CD4-positive, alpha-beta T cell (primary cell): ENCODE measurements at regions of chr6 and their contacts with region 1.

Region 1: GRCh38 chr6:144215932-144216667 is 65.8 kb downstream of the STX11 start:
- DNase-seq: peak; percentile 84 to 96 (median 90)
- ATAC-seq: peak; percentile 84
- H3K4me3 ChIP-seq: peak overlapping the region; percentile 84
- H3K4me3 Mint-ChIP-seq: peak overlapping the region; percentile 98
- H3K27ac ChIP-seq: peak overlapping the region; percentile 73 to 82
- H3K27ac Mint-ChIP-seq: peak overlapping the region; percentile 100
- H3K4me1 ChIP-seq: peaks cover 26% of the 10 kb centered on the region
- H3K4me1 Mint-ChIP-seq: peaks cover 45% of the 10 kb centered on the region
- H3K27me3 ChIP-seq: no peaks in the 10 kb centered on the region
- H3K27me3 Mint-ChIP-seq: peaks cover 18% of the 10 kb centered on the region
- CTCF ChIP-seq: peak; percentile 78

Region 2: DNA sequence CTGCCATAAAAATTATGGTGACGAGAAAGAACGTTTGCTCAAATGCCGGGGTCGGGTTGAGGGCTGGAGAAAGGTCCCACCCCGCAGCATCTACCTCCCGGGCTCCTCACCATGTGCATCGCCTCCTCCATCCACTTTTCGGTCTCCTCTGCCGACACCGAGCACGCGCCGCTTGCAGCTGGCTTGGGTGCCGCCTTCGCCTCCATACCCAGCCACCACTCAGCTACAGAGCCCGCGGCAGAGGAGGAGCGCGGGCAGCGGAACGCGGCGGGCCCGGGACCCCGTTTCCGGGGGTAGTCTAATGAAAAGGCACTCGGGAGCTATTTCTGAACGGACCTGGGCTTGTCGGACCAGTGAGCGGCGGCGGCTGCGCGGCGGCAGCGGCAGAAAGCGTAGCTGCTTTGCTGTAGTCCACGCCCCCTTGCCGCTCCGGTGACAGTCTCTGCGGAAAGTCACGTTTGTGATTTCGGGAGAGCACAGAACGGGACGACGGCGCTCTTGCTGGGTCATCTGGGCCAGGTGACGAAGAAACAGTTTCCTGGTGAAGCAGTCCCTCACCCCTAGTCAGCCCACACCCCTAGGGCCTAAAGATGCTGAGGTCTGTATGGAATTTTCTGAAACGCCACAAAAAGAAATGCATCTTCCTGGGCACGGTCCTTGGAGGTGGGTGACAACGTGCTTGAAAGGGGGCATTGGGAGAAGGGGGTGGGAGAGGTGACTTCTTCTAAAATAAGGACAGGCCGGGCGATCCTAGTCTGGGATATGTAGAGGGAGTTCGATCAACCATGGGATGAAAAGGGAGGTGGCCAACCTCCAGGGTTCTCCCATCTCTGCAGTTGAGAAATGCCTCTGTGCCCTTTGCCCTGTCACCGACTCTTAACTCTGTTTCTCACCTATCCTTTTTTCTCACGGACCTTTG is 765.4 kb before region 1 on chr6 and contains the starts of genes ADAT2 and PEX3:
- CTCF ChIA-PET with region 1: no interaction called
- POLR2A ChIA-PET with region 1: no interaction called
- intact Hi-C with region 1: loop called in 1 of 2 experiments (anchors 10 kb)
- DNase-seq: peak; percentile 85 to 97 (median 90)
- ATAC-seq: peak; percentile 90
- H3K4me3 ChIP-seq: peak within 1 kb of the TSS; percentile 72
- H3K4me3 Mint-ChIP-seq: peak within 1 kb of the TSS; percentile 99
- H3K27ac ChIP-seq: peak within 1 kb of the TSS; percentile 72 to 78
- H3K27ac Mint-ChIP-seq: peak within 1 kb of the TSS; percentile 94
- H3K4me1 ChIP-seq: peaks cover 15% of the 10 kb centered on the region
- H3K4me1 Mint-ChIP-seq: peaks cover 60% of the 10 kb centered on the region
- H3K27me3 ChIP-seq: no peaks in the 10 kb centered on the region
- H3K27me3 Mint-ChIP-seq: no peaks in the 10 kb centered on the region
- CTCF ChIP-seq: no peak
- total RNA-seq, gene ADAT2: 14.6 to 17.4 TPM
- total RNA-seq, gene PEX3: 7.3 to 9.7 TPM

Region 3: DNA sequence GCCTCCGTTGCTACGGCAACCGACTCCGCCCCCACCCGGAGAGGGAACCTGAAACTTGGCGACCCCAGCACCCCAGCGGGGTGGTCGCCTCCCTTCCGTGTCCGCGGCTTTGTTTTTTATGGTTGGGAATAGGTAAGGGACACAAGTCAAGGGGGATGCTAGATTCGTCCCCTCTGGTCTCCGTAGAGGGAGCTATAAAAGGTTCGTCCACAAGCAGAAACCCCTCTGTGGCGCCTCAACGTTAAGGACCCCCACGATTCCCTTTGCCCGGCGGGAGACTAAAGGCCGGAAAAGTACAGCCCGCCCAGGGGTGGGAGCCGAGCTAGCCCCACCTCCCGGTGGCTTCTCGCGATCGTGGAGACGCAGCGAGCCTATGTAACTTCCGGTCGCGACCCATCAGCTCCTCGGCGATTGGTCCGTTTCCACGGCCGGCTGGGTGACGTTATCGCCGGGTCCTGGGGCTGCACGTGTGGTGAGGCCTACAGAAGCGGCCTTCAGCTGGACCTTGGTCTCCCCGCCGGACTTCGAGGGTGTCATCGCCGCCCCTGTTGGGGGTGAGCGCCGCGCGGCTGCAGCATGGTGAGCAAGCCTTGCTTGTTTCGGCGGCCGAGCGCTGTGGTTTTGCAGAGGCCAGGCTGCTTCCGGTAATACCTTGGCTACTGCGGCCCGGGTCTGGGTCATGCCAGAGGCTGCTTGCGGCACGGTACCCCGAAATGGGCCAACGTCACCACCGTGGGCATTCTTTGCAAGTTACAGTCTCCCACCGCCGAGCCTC is 373.0 kb before region 1 on chr6 and contains the start of gene LTV1:
- CTCF ChIA-PET with region 1: no interaction called
- POLR2A ChIA-PET with region 1: no interaction called
- intact Hi-C with region 1: loop called (anchors 5 to 10 kb)
- DNase-seq: peak; percentile 82 to 96 (median 88)
- ATAC-seq: peak; percentile 95
- H3K4me3 ChIP-seq: peak within 1 kb of the TSS; percentile 90
- H3K4me3 Mint-ChIP-seq: peak within 1 kb of the TSS; percentile 98
- H3K27ac ChIP-seq: peak within 1 kb of the TSS; percentile 88 to 95
- H3K27ac Mint-ChIP-seq: peak within 1 kb of the TSS; percentile 98
- H3K4me1 ChIP-seq: peaks cover 23% of the 10 kb centered on the region
- H3K4me1 Mint-ChIP-seq: peaks cover 36% of the 10 kb centered on the region
- H3K27me3 ChIP-seq: no peaks in the 10 kb centered on the region
- H3K27me3 Mint-ChIP-seq: no peaks in the 10 kb centered on the region
- CTCF ChIP-seq: no peak
- total RNA-seq, gene LTV1: 27.0 to 28.5 TPM

Region 4: DNA sequence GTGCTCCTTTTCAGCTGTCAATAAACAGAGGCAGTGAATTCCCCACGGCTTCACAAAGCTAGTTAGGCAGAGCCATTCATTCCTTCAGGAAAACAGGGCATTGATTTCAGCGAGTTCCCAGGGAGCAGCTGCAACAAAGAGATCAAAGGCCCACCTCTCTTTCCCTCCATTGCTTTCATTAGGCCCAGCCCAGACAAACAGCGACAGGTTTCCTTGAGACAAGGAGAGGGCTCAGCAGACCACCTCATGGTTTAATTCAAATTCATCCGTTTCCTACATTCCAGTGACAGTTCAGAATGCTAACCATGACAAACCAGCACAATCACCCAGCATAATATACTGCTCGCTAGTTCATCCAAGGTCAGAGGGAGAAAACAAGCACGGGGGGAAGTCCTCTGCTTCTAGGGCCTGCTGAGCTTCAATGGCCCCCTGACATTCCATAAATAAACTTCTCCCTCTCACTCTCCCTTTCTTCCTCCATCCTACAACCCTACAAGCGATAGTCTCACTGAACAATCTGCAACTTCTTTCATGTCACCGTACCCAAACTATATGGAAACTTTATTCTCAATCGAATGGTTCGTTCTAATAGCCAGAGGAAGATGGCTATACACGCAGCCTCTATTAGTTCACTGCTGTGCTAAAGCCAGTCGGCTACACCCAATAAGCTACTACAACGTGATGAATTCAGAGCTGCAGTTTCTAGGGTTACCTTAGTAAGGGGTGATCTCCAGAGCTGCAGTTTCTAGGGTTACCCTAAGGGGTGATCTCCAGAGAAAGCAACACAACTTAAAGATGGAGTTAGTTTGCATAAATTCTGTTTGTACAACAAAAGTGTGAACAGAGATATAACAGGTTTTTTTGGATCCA is 242.8 kb before region 1 on chr6:
- CTCF ChIA-PET with region 1: no interaction called
- POLR2A ChIA-PET with region 1: no interaction called
- intact Hi-C with region 1: no loop called
- DNase-seq: no peak
- ATAC-seq: no peak
- H3K4me3 ChIP-seq: no peak overlapping the region
- H3K4me3 Mint-ChIP-seq: no peak overlapping the region
- H3K27ac ChIP-seq: no peak overlapping the region
- H3K27ac Mint-ChIP-seq: no peak overlapping the region
- H3K4me1 ChIP-seq: no peaks in the 10 kb centered on the region
- H3K4me1 Mint-ChIP-seq: no peaks in the 10 kb centered on the region
- H3K27me3 ChIP-seq: no peaks in the 10 kb centered on the region
- H3K27me3 Mint-ChIP-seq: no peaks in the 10 kb centered on the region
- CTCF ChIP-seq: no peak

Region 5: GRCh38 chr6:144063744-144064401 is 152.2 kb before region 1 on chr6:
- CTCF ChIA-PET with region 1: interaction called, 7 read pairs
- POLR2A ChIA-PET with region 1: interaction called, 4 read pairs
- intact Hi-C with region 1: loop called in 1 of 2 experiments (anchors 1 kb)
- DNase-seq: peak; percentile 84 to 96 (median 91)
- ATAC-seq: peak; percentile 90
- H3K4me3 ChIP-seq: peak overlapping the region; percentile 73
- H3K4me3 Mint-ChIP-seq: peak overlapping the region; percentile 95
- H3K27ac ChIP-seq: peak overlapping the region; percentile 75 to 90
- H3K27ac Mint-ChIP-seq: peak overlapping the region; percentile 95
- H3K4me1 ChIP-seq: peaks cover 20% of the 10 kb centered on the region
- H3K4me1 Mint-ChIP-seq: peaks cover 31% of the 10 kb centered on the region
- H3K27me3 ChIP-seq: no peaks in the 10 kb centered on the region
- H3K27me3 Mint-ChIP-seq: no peaks in the 10 kb centered on the region
- CTCF ChIP-seq: peak; percentile 41

Region 6: GRCh38 chr6:144104898-144105487 is 111.1 kb before region 1 on chr6:
- CTCF ChIA-PET with region 1: interaction called, 7 read pairs
- POLR2A ChIA-PET with region 1: interaction called, 5 read pairs
- intact Hi-C with region 1: loop called (anchors 1 kb)
- DNase-seq: peak in 5 of 14 experiments; percentile 20 to 83 (median 82)
- ATAC-seq: peak; percentile 82
- H3K4me3 ChIP-seq: no peak overlapping the region
- H3K4me3 Mint-ChIP-seq: no peak overlapping the region
- H3K27ac ChIP-seq: no peak overlapping the region
- H3K27ac Mint-ChIP-seq: no peak overlapping the region
- H3K4me1 ChIP-seq: no peaks in the 10 kb centered on the region
- H3K4me1 Mint-ChIP-seq: peaks cover 4% of the 10 kb centered on the region
- H3K27me3 ChIP-seq: no peaks in the 10 kb centered on the region
- H3K27me3 Mint-ChIP-seq: no peaks in the 10 kb centered on the region
- CTCF ChIP-seq: peak; percentile 79

Region 7: DNA sequence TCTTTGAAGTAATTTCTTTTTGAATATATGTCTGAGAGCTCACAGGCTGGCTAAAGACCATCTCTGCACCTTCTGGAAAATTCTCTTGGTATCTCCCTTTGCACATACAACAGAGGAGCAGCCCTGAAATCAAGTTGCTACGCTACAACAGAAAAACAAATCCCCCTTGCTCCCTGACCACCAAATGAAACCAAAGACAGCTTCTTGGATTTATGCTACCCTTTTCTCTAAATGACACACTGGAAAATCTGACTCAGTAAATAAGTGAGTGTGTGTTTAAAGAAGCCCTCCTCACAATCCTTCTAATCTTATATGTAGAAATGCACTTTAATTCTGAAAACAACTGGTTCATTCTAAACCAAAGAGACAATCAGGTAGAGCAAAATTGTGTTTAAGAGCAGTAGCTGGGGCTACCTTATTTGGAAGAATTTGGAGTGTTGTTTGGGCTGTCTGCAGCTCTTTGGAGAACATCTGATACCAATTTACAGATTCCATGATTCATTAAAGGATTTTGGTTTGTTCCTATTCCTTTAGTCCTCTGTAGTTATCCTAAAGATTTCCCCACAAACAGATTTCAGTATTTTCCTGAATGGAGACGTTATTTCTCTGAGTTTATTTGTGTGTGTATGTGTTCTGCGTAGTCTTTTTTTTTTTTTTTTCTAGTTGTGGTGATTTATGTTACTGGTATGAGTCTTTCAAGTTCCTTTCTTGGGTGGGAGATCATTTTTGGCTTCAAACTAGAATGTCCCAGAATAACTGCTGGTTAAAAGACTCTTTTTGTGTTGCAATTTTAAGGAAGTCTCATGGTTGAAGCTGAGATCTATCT is 32.6 kb after region 1 on chr6:
- CTCF ChIA-PET with region 1: no interaction called
- POLR2A ChIA-PET with region 1: no interaction called
- intact Hi-C with region 1: no loop called
- DNase-seq: no peak
- ATAC-seq: no peak
- H3K4me3 ChIP-seq: no peak overlapping the region
- H3K4me3 Mint-ChIP-seq: no peak overlapping the region
- H3K27ac ChIP-seq: no peak overlapping the region
- H3K27ac Mint-ChIP-seq: no peak overlapping the region
- H3K4me1 ChIP-seq: no peaks in the 10 kb centered on the region
- H3K4me1 Mint-ChIP-seq: no peaks in the 10 kb centered on the region
- H3K27me3 ChIP-seq: no peaks in the 10 kb centered on the region
- H3K27me3 Mint-ChIP-seq: peaks cover 8% of the 10 kb centered on the region
- CTCF ChIP-seq: no peak

Region 8: GRCh38 chr6:144343701-144344428 is 127.8 kb after region 1 on chr6:
- CTCF ChIA-PET with region 1: interaction called, 3 read pairs
- POLR2A ChIA-PET with region 1: no interaction called
- intact Hi-C with region 1: loop called (anchors 5 kb)
- DNase-seq: peak in 11 of 14 experiments; percentile 30 to 91 (median 48)
- ATAC-seq: peak; percentile 74
- H3K4me3 ChIP-seq: peak overlapping the region; percentile 72
- H3K4me3 Mint-ChIP-seq: peak overlapping the region; percentile 88
- H3K27ac ChIP-seq: peak overlapping the region; percentile 56 to 75
- H3K27ac Mint-ChIP-seq: peak overlapping the region; percentile 89
- H3K4me1 ChIP-seq: peaks cover 58% of the 10 kb centered on the region
- H3K4me1 Mint-ChIP-seq: peaks cover 73% of the 10 kb centered on the region
- H3K27me3 ChIP-seq: no peaks in the 10 kb centered on the region
- H3K27me3 Mint-ChIP-seq: no peaks in the 10 kb centered on the region
- CTCF ChIP-seq: no peak